ENCODE measurements at regions of chr10 and their contacts with region 1.

Region 1: DNA sequence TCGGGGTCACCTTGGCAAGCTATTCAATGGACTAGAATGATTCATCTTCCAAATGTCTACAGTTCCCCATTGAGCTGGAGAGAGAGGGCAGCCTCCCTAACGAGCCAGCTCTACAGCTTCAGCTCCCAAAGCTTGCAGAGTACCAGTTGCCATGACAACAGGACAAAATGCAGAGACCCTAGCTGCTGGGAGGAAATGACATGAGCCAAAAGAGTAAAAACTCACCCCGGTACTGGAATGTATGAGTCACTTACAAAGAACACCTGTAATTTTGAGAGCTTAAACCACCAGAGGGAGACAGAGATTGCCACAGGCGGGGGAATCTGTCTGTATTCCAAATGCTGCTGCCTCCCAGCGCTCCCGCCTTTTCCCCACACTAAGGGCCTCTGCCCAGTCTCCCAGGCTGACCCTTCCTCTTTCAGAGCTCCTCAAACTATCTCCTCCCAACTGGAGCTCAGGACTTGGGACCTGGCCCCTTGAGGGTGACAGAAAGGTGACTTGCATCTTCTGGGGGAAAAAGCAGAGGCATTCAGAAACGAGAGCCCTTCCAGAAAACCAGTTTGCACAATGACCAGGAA is 95.5 kb downstream of the CUL2 start:
- DNase-seq: peak; percentile 63

Region 2: DNA sequence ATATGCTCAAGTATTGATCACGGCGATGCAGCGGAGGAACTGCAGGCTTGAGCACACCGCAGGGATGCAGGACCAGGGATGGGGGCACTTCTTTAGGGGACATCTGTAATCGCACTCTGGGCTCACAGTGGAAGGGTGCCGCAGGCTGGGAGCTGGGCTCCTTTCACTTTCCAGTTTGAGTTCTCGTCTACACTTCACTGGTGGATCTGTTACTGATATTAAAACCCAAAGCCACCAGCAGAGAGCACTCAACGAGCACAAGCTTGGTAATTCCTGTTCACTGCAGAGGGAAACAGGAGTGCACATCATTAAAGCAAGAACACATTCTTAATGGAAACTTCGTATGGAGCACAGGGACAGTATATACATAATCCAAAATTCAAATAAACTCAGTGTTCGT is 270.9 kb before region 1 on chr10:
- CTCF ChIA-PET with region 1: interaction called, 11 read pairs
- POLR2A ChIA-PET with region 1: no interaction called
- DNase-seq: peak; percentile 24

Measured in HEK293T (cell line).